ENCODE measurements at regions of chr20 and their contacts with region 1.

Region 1: GRCh38 chr20:23399568-23400241 is 21.6 kb downstream of the NAPB start:
- DNase-seq: peak; percentile 15
- H3K4me3 Mint-ChIP-seq: no peak overlapping the region
- H3K27ac Mint-ChIP-seq: no peak overlapping the region
- H3K4me1 Mint-ChIP-seq: peaks cover 27% of the 10 kb centered on the region
- H3K27me3 Mint-ChIP-seq: no peaks in the 10 kb centered on the region

Region 2: DNA sequence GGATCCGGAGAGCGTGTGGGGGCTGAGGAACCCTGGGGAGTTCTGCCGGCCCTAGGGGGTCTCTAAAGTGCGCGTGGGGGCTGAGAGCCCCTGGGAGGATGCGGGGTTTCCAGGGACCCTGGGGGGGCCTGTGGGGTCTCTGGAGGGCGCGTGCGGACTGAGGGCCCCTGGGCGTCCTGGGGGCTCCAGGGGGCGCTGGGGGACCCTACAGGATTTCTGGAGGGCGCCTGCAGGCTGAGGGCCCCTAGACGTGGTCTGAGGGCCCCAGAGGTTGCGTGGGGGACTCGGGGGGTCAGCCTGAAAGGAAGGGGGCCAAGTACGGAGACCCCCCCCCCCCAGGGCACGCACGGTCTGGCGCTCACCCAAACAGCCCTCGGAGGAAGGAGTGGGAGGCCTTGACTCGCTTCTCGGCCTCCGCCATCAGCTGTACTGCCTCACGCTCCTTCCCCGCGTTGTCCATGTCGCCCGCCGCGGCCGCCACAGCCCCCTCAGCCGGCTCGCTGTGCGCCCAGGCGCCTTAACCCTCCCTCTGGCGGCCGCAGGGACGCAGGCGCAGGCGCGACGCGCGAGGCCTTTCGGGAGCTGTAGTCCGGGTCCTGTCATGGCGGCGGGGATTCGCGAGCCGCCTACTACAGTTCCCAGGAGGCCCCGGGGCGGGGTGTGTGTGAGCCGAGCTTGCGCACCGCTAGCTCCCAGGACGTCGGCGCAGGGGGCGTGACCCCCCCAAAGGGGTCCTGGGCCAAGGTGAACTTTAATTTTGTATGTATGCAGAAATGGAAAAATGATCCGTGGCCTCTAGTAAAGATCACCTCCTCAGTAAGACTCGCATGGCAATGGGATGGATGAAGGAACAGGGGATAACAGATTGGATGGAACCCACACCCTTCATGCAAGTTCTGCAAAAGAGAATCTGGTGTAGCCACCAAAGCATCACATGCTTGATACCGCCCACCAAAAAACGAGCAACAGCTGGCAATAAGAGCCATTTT is 21.5 kb after region 1 on chr20 and contains the start of gene NAPB:
- CTCF ChIA-PET with region 1: interaction called, 3 read pairs
- intact Hi-C with region 1: loop called (anchors 1 kb)
- DNase-seq: peak; percentile 94
- H3K4me3 Mint-ChIP-seq: peak within 1 kb of the TSS; percentile 81
- H3K27ac Mint-ChIP-seq: no peak within 1 kb of the TSS
- H3K4me1 Mint-ChIP-seq: peaks cover 24% of the 10 kb centered on the region
- H3K27me3 Mint-ChIP-seq: peaks cover 5% of the 10 kb centered on the region
- total RNA-seq, gene NAPB: 5.4 to 7.6 TPM

Region 3: GRCh38 chr20:23461180-23461579 is 61.5 kb after region 1 on chr20:
- CTCF ChIA-PET with region 1: no interaction called
- intact Hi-C with region 1: no loop called
- DNase-seq: no peak
- H3K4me3 Mint-ChIP-seq: no peak overlapping the region
- H3K27ac Mint-ChIP-seq: no peak overlapping the region
- H3K4me1 Mint-ChIP-seq: peaks cover 3% of the 10 kb centered on the region
- H3K27me3 Mint-ChIP-seq: peaks cover 23% of the 10 kb centered on the region